Naive thymus-derived CD4-positive, alpha-beta T cell (primary cell): ENCODE measurements at regions of chr17 and their contacts with region 1.

Region 1: GRCh38 chr17:75430159-75430974 is 24.9 kb upstream of the GRB2 start:
- DNase-seq: no peak
- ATAC-seq: no peak
- H3K4me3 ChIP-seq: no peak overlapping the region
- H3K4me3 Mint-ChIP-seq: no peak overlapping the region
- H3K27ac ChIP-seq: no peak overlapping the region
- H3K27ac Mint-ChIP-seq: no peak overlapping the region
- H3K4me1 ChIP-seq: peaks cover 0 to 6% of the 10 kb centered on the region in 2 donors
- H3K4me1 Mint-ChIP-seq: peaks cover 6 to 17% (median 9%) of the 10 kb centered on the region in 7 donors
- H3K27me3 ChIP-seq: no peaks in the 10 kb centered on the region
- H3K27me3 Mint-ChIP-seq: peaks cover 0 to 38% (median 4%) of the 10 kb centered on the region in 5 donors

Region 2: DNA sequence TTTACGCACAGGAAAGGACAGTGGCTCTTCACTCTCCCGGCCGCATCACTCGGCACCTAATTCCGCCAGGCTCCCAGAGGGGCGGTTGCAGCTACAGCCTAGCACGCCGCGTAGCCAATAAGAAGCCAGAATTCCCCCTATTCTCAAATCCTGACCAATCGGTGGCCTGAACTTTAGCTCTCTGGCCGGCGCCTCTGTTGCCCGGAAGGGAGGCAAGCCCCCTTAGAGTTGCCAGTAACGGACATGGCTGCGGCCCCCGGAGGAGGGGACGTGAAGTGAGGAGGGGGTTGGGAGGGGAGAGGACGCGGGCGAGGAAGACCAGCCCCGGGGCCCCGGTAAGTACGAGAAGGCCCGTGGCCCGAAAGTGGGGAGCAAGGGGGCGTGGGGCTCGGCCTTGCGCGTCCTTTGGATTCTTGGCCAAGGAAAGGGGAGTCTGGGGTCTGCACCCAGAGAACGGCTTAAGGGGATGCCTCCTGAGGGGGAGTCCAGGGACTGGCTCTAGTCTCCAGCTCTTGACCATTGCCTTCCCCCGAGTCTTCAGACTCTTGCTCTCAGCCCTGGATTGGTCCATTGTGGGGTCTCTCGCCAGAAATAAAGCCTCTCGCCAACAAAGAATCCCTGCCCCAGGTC is 26.2 kb after region 1 on chr17 and contains the start of gene TMEM94:
- CTCF ChIA-PET with region 1: no interaction called
- POLR2A ChIA-PET with region 1: no interaction called
- intact Hi-C with region 1: loop called (anchors 1 to 2 kb)
- DNase-seq: peak; percentile 70 to 93 (median 89)
- ATAC-seq: peak; percentile 98
- H3K4me3 ChIP-seq: peak within 1 kb of the TSS; percentile 99
- H3K4me3 Mint-ChIP-seq: peak within 1 kb of the TSS; percentile 92 to 99 (median 94)
- H3K27ac ChIP-seq: peak within 1 kb of the TSS; percentile 74
- H3K27ac Mint-ChIP-seq: peak within 1 kb of the TSS; percentile 84 to 99 (median 93)
- H3K4me1 ChIP-seq: peaks cover 10% of the 10 kb centered on the region in 2 donors
- H3K4me1 Mint-ChIP-seq: peaks cover 25 to 42% (median 34%) of the 10 kb centered on the region in 7 donors
- H3K27me3 ChIP-seq: no peaks in the 10 kb centered on the region
- H3K27me3 Mint-ChIP-seq: no peaks in the 10 kb centered on the region
- total RNA-seq, gene TMEM94: 74.1 to 97.2 (median 81.9) TPM

Region 3: DNA sequence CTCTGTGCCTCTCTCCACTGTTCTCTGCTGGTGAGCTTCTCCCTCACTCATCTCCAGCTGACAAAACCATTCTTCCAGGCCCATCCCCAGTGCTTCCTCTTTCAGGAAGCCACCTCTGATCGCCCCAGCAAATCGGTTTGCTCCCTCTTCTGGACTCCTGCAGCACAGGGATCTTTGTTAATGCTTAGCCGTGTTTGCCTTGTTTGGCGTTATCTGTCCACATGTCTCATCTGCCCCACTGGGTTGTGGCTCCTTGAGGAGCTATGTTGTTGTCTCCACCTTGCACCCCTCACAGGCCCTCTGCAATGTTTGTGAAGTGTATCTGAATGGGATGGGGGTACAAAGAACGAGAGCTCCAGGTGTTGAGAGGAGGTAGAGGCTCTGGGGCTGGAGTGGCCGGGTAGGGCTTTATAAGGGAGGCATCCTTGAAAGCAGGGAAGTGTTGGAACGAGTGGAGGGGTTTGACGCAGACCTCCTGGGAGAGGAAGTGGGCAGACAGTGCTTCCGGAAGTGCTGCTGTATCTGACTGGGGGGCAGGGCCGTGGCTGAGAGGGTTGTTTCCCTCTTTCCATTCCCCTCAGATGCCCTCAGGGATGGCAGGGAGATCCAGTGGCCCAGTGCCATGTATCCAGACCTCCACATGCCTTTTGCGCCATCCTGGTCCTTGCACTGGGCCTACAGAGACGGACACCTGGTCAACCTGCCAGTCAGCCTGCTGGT is 57.1 kb after region 1 on chr17:
- CTCF ChIA-PET with region 1: interaction called, 4 read pairs
- POLR2A ChIA-PET with region 1: no interaction called
- intact Hi-C with region 1: loop called in 1 of 2 experiments (anchors 1 kb)
- DNase-seq: peak in 8 of 9 donors; percentile 35 to 67 (median 62)
- ATAC-seq: peak; percentile 83
- H3K4me3 ChIP-seq: peak overlapping the region; percentile 49
- H3K4me3 Mint-ChIP-seq: peak overlapping the region; percentile 75 to 88 (median 80)
- H3K27ac ChIP-seq: peak overlapping the region; percentile 73
- H3K27ac Mint-ChIP-seq: peak overlapping the region; percentile 94 to 98 (median 96)
- H3K4me1 ChIP-seq: peaks cover 16 to 25% of the 10 kb centered on the region in 2 donors
- H3K4me1 Mint-ChIP-seq: peaks cover 18 to 39% (median 24%) of the 10 kb centered on the region in 7 donors
- H3K27me3 ChIP-seq: no peaks in the 10 kb centered on the region
- H3K27me3 Mint-ChIP-seq: no peaks in the 10 kb centered on the region

Region 4: DNA sequence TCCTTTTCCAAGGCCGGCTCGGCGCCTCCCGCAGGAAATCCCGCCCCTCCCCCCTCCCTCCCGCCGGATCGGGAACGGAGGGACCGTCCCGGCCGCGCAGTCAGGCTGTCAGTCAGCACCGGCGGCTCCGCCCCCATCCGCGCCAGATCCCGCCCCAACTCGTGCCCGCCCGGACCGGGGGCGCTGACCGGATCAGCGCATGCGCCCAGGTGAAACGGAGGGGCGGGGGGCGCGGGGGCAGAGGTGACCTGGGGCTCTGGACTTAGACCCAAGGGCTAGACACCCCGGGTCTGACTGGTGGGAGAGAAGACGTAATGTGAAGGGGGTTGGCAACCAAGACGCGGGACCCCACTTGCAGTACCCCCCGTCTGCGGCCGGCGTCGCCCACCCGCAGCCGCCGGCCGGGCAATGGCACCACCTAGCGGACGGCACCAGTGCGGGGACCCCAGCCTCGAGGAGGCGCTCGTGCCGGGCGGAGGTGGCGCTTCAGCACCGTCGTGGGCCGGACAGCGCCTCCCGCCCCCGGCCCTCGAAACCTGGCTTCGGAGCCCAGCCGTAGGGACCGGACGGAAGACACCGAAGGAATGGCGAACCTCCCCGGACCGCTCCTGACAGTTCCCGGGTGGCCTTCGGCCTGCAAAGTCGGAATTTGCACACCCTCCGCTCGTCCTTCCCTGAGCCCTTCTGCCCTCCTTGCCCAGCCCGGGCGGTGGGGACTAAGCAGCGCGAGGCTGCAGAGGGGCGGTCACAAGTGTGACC is 85.3 kb after region 1 on chr17 and contains the start of gene CASKIN2:
- CTCF ChIA-PET with region 1: interaction called, 4 read pairs
- POLR2A ChIA-PET with region 1: no interaction called
- intact Hi-C with region 1: loop called (anchors 1 kb)
- DNase-seq: peak; percentile 57 to 88 (median 70)
- ATAC-seq: peak; percentile 80
- H3K4me3 ChIP-seq: peak within 1 kb of the TSS; percentile 97
- H3K4me3 Mint-ChIP-seq: peak within 1 kb of the TSS; percentile 69 to 85 (median 78)
- H3K27ac ChIP-seq: no peak within 1 kb of the TSS
- H3K27ac Mint-ChIP-seq: peak within 1 kb of the TSS in 4 of 9 donors; percentile 36 to 63 (median 47)
- H3K4me1 ChIP-seq: peaks cover 23 to 25% of the 10 kb centered on the region in 2 donors
- H3K4me1 Mint-ChIP-seq: peaks cover 18 to 28% (median 22%) of the 10 kb centered on the region in 7 donors
- H3K27me3 ChIP-seq: no peaks in the 10 kb centered on the region
- H3K27me3 Mint-ChIP-seq: peaks cover 0 to 14% (median 0%) of the 10 kb centered on the region in 5 donors
- total RNA-seq, gene CASKIN2: 0.22 to 1.2 (median 0.92) TPM

Region 5: DNA sequence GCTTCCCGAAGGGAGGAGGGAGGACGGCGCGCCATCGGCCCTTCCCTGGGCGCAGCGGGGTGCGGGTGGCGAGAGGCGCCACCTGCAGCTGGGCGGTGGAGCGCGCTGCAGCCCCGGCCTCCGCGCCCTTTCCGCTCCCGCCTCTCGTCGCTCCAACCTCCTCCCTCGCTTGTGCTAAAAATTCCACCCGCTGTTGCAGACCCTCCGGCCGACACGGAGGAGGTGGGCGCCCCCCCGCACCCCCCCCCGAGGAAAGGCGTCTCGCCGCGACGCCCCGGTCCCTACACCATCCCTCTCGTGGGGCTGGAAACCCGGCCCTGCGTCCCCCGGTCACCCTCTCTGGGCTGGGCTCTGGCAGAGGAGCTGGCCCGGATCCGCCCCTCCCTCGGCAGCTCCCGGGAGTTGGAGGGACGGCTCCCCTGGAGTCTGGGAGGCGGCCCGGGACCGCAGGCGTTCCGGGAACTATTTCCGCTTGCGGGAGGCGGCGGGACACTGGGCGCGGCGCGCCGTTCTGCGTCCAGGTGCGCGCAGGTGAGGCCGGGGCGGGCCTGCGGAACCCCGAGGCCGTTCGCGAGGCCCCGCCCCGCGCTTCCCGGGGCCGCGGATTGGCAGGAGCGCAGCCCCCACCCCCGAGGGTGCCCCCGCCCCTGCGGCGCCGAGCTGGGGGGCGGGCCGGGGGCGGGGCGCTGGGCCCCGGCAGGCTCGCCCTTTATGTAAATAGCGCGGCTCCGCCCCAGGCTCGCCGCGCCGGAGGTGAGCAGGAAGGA is 94.8 kb after region 1 on chr17 and contains the start of gene LLGL2:
- CTCF ChIA-PET with region 1: interaction called, 3 read pairs
- POLR2A ChIA-PET with region 1: no interaction called
- intact Hi-C with region 1: loop called in 1 of 2 experiments (anchors 1 kb)
- DNase-seq: peak; percentile 82 to 91 (median 89)
- ATAC-seq: peak; percentile 98
- H3K4me3 ChIP-seq: peak within 1 kb of the TSS; percentile 75
- H3K4me3 Mint-ChIP-seq: peak within 1 kb of the TSS; percentile 76 to 86 (median 82)
- H3K27ac ChIP-seq: peak within 1 kb of the TSS; percentile 67
- H3K27ac Mint-ChIP-seq: peak within 1 kb of the TSS in 7 of 9 donors; percentile 45 to 74 (median 59)
- H3K4me1 ChIP-seq: peaks cover 6 to 7% of the 10 kb centered on the region in 2 donors
- H3K4me1 Mint-ChIP-seq: peaks cover 0 to 20% (median 16%) of the 10 kb centered on the region in 7 donors
- H3K27me3 ChIP-seq: no peaks in the 10 kb centered on the region
- H3K27me3 Mint-ChIP-seq: peaks cover 0 to 11% (median 0%) of the 10 kb centered on the region in 5 donors
- total RNA-seq, gene LLGL2: 22.4 to 55.7 (median 33.7) TPM

Region 6: GRCh38 chr17:75557075-75557882 is 126.9 kb after region 1 on chr17:
- CTCF ChIA-PET with region 1: no interaction called
- POLR2A ChIA-PET with region 1: no interaction called
- intact Hi-C with region 1: loop called in 1 of 2 experiments (anchors 1 kb)
- DNase-seq: no peak
- ATAC-seq: no peak
- H3K4me3 ChIP-seq: no peak overlapping the region
- H3K4me3 Mint-ChIP-seq: no peak overlapping the region
- H3K27ac ChIP-seq: no peak overlapping the region
- H3K27ac Mint-ChIP-seq: peak overlapping the region in 1 of 9 donors; percentile 52
- H3K4me1 ChIP-seq: no peaks in the 10 kb centered on the region
- H3K4me1 Mint-ChIP-seq: no peaks in the 10 kb centered on the region
- H3K27me3 ChIP-seq: no peaks in the 10 kb centered on the region
- H3K27me3 Mint-ChIP-seq: no peaks in the 10 kb centered on the region

Region 7: DNA sequence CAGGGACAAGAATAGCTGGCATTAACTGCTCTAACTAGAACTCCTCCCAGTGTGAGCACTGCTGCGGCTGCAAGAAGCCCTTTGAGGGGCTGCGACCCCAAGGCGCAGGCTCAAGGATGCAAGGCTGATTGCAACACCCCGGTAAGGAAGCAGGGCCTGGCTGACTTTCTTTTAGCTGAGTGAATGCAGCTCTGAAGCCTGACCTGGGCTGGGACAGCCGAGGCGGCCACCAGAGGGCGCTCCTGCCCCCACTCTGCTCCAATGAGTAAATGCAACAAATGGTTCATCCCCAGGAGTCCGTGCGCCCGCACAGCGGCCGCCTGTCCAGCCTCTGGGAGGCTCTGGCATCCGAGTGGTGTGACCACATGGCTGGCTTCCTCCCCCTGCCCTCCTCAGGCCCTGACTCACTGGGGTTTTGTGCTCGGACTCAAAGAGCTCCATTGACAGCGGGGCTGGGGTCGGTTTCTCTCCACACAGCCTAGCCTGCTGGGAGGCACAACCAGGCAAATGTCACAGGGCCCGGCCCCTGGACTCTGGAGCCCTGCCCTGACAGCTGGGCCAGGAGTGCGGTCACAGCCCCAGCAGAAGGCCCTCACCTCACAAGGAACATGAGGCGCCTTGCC is 202.6 kb after region 1 on chr17 and contains the start of gene SMIM5:
- CTCF ChIA-PET with region 1: interaction called, 5 read pairs
- POLR2A ChIA-PET with region 1: no interaction called
- intact Hi-C with region 1: loop called in 1 of 2 experiments (anchors 1 kb)
- DNase-seq: peak; percentile 62 to 85 (median 80)
- ATAC-seq: peak; percentile 93
- H3K4me3 ChIP-seq: no peak within 1 kb of the TSS
- H3K4me3 Mint-ChIP-seq: peak within 1 kb of the TSS in 2 of 10 donors; percentile 19 to 21
- H3K27ac ChIP-seq: no peak within 1 kb of the TSS
- H3K27ac Mint-ChIP-seq: peak within 1 kb of the TSS in 3 of 9 donors; percentile 12 to 43 (median 35)
- H3K4me1 ChIP-seq: peaks cover 0 to 8% of the 10 kb centered on the region in 2 donors
- H3K4me1 Mint-ChIP-seq: peaks cover 3 to 14% (median 7%) of the 10 kb centered on the region in 7 donors
- H3K27me3 ChIP-seq: no peaks in the 10 kb centered on the region
- H3K27me3 Mint-ChIP-seq: no peaks in the 10 kb centered on the region
- total RNA-seq, gene SMIM5: 0.43 to 2.4 (median 0.84) TPM

Region 8: DNA sequence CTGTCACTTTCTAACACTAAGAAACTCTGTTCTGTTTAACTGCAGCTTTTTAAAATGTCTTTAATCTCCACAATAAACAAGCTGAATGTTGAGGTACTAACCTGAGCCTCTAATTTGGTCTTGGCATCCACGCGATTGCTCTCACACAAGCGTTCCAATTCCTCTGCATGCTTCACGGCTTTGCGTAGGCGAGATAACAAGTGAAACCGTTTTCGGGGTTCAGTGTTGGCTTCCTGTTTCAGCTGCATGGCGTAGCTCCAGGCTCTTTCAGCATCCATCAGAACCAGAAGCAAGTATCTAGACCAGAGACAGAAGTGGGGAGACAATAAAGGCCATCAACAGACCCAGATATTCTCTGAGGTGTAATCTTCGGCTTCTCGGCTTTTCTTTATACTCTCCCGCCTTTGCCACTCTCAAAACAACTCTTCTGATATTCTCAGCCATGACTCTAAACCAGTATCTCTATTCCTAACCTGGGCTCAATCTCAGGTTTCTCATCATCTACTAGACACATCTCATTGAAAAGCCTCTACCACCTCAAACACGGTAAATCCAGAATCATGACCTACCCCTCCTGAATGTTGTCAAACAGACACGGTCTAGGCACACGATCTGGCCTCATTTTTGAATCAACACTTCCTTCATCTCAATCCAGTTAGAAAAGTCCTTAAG is 633.6 kb after region 1 on chr17:
- CTCF ChIA-PET with region 1: no interaction called
- POLR2A ChIA-PET with region 1: no interaction called
- intact Hi-C with region 1: no loop called
- DNase-seq: peak in 7 of 9 donors; percentile 28 to 76 (median 44)
- ATAC-seq: peak; percentile 95
- H3K4me3 ChIP-seq: no peak overlapping the region
- H3K4me3 Mint-ChIP-seq: peak overlapping the region; percentile 12 to 77 (median 68)
- H3K27ac ChIP-seq: peak overlapping the region; percentile 52
- H3K27ac Mint-ChIP-seq: peak overlapping the region; percentile 82 to 97 (median 91)
- H3K4me1 ChIP-seq: no peaks in the 10 kb centered on the region
- H3K4me1 Mint-ChIP-seq: peaks cover 10 to 30% (median 17%) of the 10 kb centered on the region in 7 donors
- H3K27me3 ChIP-seq: no peaks in the 10 kb centered on the region
- H3K27me3 Mint-ChIP-seq: no peaks in the 10 kb centered on the region